ENCODE measurements at regions of chr10 and their contacts with region 1.

Region 1: DNA sequence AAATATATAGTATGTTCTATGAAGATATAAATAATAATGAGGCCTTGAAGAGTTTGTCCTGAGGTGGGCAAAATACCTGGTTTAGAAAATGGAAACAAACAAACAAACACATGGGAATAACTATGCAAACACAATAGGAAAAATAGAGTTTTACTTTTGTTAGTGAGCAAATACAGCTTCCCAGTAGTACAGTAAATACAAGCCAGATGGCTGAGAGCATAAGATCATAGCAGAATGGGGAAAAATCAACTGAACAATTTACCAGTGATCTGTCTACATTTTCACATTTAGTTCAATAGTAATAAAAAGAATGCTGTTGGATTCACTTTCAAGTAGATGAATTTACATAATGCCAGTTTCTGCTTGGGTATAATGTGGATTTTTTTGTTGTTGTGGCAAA is 45.1 kb downstream of the ADD3 start:
- DNase-seq: no peak
- ATAC-seq: no peak
- H3K4me3 ChIP-seq: no peak overlapping the region
- H3K27ac ChIP-seq: no peak overlapping the region
- H3K4me1 ChIP-seq: no peaks in the 10 kb centered on the region
- H3K27me3 ChIP-seq: no peaks in the 10 kb centered on the region
- CTCF ChIP-seq: no peak
- EP300 ChIP-seq: no peak
- POLR2A ChIP-seq: no peak
- RAD21 ChIP-seq: no peak

Region 2: GRCh38 chr10:110042181-110042580 is 10.7 kb before region 1 on chr10:
- CTCF ChIA-PET with region 1: interaction called, 5 read pairs
- POLR2A ChIA-PET with region 1: interaction called, 6 read pairs
- RAD21 ChIA-PET with region 1: interaction called, 4 read pairs
- SMC1A ChIA-PET with region 1: interaction called, 15 read pairs
- in situ Hi-C with region 1: no loop called
- intact Hi-C with region 1: no loop called
- DNase-seq: no peak
- ATAC-seq: peak; percentile 84
- H3K4me3 ChIP-seq: no peak overlapping the region
- H3K27ac ChIP-seq: no peak overlapping the region
- H3K4me1 ChIP-seq: no peaks in the 10 kb centered on the region
- H3K27me3 ChIP-seq: no peaks in the 10 kb centered on the region
- CTCF ChIP-seq: no peak
- EP300 ChIP-seq: no peak
- POLR2A ChIP-seq: no peak
- RAD21 ChIP-seq: no peak